Endothelial cell of umbilical vein (primary cell): ENCODE measurements at regions of chr20 and their contacts with region 1.

Region 1: GRCh38 chr20:2470423-2471193 is at the start of gene SNRPB:
- DNase-seq: peak; percentile 98
- H3K4me3 ChIP-seq: peak within 1 kb of the TSS; percentile 87 to 98 (median 91)
- H3K27ac ChIP-seq: peak within 1 kb of the TSS; percentile 86
- H3K4me1 ChIP-seq: peaks cover 17% of the 10 kb centered on the region
- H3K27me3 ChIP-seq: no peaks in the 10 kb centered on the region
- CTCF ChIP-seq: no peak
- POLR2A ChIP-seq: peak; percentile 98
- total RNA-seq, gene SNRPB: 296 and 323 TPM in 2 replicates

Region 2: DNA sequence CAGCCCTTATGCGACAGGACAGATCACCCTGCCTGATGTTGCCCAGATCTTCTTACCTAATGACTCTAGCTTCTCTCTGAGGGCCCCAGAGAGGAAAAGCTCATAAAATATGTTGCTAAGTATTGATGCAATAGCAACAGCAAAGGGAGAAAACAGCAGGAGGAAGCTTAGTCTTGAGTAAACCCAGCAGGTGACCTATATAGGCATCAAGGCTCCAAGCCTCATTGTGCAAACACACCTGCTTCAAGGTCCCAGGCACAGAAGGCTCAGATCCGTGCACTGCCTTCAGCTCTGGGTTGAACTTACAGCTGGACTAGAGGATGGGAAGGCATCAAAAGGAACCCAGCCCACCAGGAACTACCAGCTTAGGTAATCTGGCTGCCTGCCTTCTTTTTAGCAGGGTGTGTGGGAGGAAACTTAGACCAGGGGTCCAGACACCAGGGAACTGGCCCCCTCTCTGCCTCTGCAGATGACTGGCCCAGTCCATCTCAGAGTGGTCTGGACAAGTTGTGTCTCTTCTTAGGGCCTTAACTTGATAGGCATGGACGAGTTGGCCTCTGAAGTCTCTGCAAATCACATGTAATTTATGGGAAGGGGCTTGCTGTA is 140.4 kb before region 1 on chr20:
- CTCF ChIA-PET with region 1: no interaction called
- POLR2A ChIA-PET with region 1: no interaction called
- dilution Hi-C with region 1: no loop called
- intact Hi-C with region 1: no loop called
- DNase-seq: no peak
- H3K4me3 ChIP-seq: no peak overlapping the region
- H3K27ac ChIP-seq: no peak overlapping the region
- H3K4me1 ChIP-seq: no peaks in the 10 kb centered on the region
- H3K27me3 ChIP-seq: peaks cover 0 to 4% of the 10 kb centered on the region in 2 experiments
- CTCF ChIP-seq: no peak
- POLR2A ChIP-seq: no peak

Region 3: DNA sequence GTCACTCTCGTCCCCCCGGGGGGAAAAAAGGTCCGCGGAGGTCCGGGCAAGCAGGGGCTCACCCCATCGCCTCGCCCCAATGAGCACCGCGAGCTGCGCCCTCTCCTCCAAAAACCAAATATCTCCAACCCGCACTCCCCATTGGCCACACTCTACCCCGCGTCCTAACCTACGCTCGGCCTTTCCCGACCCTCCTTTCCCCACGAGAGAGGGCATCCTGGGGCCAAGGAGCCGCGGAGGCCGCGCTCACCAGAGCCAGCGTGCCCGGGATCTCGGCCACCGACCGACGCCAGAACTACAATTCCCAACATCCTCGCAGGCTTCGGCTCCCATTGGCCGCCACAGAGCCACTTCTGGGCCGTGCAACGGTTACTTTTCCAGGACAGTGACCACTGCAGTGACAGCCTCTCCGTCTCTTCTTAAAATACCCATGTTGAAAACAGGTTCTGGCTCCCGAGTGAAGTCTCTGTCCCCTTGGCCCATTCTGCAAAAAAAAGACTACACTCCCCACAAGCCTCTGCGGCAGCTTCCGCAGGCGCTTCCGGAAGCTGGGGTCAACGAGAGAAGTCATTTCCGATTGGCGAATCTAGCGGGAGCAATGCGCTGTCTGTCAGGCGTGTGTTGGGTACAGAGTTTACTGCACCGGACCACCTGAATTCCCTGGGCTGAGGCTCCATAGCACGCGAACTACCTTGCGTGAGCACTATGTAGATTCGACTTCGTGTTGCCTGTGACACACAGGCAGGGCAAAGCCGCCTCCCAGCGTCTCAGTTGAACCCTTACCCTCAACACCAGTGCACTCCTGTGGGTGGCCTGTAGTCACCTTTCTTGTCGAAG is 38.2 kb after region 1 on chr20 and contains the start of gene ZNF343:
- CTCF ChIA-PET with region 1: no interaction called
- POLR2A ChIA-PET with region 1: no interaction called
- dilution Hi-C with region 1: no loop called
- intact Hi-C with region 1: loop called (anchors 1 kb)
- DNase-seq: peak; percentile 90
- H3K4me3 ChIP-seq: peak within 1 kb of the TSS; percentile 73 to 85 (median 77)
- H3K27ac ChIP-seq: peak within 1 kb of the TSS; percentile 46
- H3K4me1 ChIP-seq: peaks cover 10% of the 10 kb centered on the region
- H3K27me3 ChIP-seq: no peaks in the 10 kb centered on the region
- CTCF ChIP-seq: no peak
- POLR2A ChIP-seq: peak; percentile 86
- total RNA-seq, gene ZNF343: 7.9 and 9.2 TPM in 2 replicates